Activated CD4-positive, alpha-beta memory T cell treated with anti-CD3 and anti-CD28 coated beads, Interleukin-2, amount 10 ng/mL, durations not matched to agents 7 days and 5 days (primary cell): ENCODE measurements at regions of chr12 and their contacts with region 1.

Region 1: GRCh38 chr12:40032433-40033241 is 73.2 kb downstream of the SLC2A13 start:
- DNase-seq: no peak
- H3K4me3 Mint-ChIP-seq: no peak overlapping the region
- H3K27ac Mint-ChIP-seq: no peak overlapping the region
- H3K4me1 Mint-ChIP-seq: no peaks in the 10 kb centered on the region
- H3K27me3 Mint-ChIP-seq: no peaks in the 10 kb centered on the region

Region 2: GRCh38 chr12:39972119-39972518 is 60.5 kb before region 1 on chr12:
- CTCF ChIA-PET with region 1: no interaction called
- POLR2A ChIA-PET with region 1: no interaction called
- DNase-seq: no peak
- H3K4me3 Mint-ChIP-seq: no peak overlapping the region
- H3K27ac Mint-ChIP-seq: no peak overlapping the region
- H3K4me1 Mint-ChIP-seq: no peaks in the 10 kb centered on the region
- H3K27me3 Mint-ChIP-seq: no peaks in the 10 kb centered on the region

Region 3: DNA sequence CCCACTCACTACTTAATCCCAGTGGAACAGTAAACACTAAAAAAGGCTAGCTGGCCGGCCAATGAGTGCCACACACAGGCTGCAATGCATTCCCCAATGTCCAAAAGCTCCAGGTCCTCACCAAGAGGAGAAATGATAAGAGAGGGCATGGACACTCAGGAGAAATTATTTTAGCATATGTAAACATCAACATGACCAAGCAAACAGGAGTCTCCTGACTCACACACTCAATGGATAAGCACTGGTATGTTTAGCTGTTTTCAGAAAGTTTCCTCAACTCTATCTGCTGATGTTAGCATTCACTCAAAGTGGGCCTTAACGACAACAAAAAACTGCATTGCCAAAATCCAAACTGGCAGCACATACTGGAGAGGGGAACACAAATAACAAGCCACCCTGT is 31.8 kb before region 1 on chr12:
- CTCF ChIA-PET with region 1: no interaction called
- POLR2A ChIA-PET with region 1: no interaction called
- DNase-seq: no peak
- H3K4me3 Mint-ChIP-seq: no peak overlapping the region
- H3K27ac Mint-ChIP-seq: no peak overlapping the region
- H3K4me1 Mint-ChIP-seq: peaks cover 3% of the 10 kb centered on the region
- H3K27me3 Mint-ChIP-seq: no peaks in the 10 kb centered on the region

Region 4: DNA sequence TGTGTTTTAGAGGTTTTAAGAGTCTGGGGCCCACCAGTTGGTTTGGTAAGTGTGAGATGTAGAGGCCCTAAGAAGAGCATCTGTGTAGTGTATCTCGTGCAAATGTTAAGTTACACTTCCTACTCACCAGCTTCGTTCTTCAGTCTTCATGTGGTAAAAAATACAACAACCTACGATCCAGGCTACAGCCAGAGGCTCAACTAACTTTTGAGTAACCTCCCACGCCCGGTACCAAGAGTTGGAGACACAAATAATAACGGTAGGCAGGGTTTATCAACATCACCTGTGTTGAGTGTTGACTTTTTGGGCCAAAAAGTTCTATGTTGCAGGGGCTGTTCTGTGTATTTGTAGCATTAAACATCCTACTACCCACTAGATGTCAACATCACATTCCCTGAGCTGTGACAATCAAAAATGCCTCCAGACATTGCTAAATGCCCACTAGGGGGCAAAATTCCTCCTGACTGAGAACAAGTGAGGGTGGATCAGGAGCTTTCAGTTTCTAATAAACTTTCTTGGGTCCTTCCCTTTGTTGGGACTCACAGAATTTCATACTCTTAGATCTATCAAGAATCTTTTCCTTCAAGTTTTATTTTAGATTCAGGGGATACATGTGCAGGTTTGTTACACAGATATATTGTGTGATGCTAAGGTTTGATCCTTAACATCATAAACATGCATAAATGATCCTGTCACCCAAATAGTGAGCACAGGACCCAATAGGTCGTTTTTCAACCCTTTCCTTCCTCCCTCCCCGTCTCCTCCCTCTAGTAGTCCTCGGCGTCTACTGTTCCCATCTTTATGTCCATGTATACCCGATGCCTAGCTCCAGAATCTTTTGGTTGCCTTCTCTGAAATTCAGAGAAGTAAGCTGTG is 21.5 kb before region 1 on chr12:
- CTCF ChIA-PET with region 1: interaction called, 13 read pairs
- POLR2A ChIA-PET with region 1: no interaction called
- DNase-seq: peak; percentile 45
- H3K4me3 Mint-ChIP-seq: peak overlapping the region; percentile 45
- H3K27ac Mint-ChIP-seq: no peak overlapping the region
- H3K4me1 Mint-ChIP-seq: peaks cover 14% of the 10 kb centered on the region
- H3K27me3 Mint-ChIP-seq: no peaks in the 10 kb centered on the region

Region 5: DNA sequence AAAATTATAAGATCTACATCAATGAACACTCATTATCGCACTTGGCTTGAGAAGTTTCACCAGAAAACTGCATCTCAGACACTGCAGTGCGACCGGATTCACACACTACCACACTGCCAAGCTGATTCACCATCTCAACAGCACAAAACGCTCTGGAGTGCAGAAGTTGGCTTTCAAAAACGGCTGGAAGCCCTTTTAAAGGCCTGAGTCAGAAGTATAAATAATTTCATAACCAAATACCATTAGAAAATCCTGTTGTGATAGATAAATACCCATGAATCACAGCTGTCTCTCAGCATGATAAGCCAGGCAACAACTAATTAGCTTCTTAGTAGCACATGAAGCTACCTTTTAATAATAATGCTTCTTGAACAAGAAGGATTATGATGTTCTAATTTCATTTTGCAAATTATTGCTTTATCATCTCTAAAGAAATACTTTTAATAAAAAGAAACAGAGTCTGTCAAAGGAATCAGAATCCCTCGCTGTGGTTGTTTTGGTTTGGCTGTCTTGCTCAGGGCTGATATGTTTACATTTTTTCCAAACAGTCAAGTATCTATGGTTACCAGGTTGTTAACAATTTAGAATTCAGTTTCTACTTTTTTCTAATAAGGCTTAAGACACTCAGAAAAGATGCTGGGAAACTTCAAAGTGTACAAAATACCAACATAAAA is 22.1 kb after region 1 on chr12:
- CTCF ChIA-PET with region 1: no interaction called
- POLR2A ChIA-PET with region 1: no interaction called
- DNase-seq: no peak
- H3K4me3 Mint-ChIP-seq: no peak overlapping the region
- H3K27ac Mint-ChIP-seq: no peak overlapping the region
- H3K4me1 Mint-ChIP-seq: no peaks in the 10 kb centered on the region
- H3K27me3 Mint-ChIP-seq: no peaks in the 10 kb centered on the region